ENCODE measurements at regions of chr6 and their contacts with region 1.

Region 1: GRCh38 chr6:44221291-44221960 is 2.0 kb upstream of the SLC29A1 start:
- DNase-seq: peak; percentile 61 to 87
- ATAC-seq: peak; percentile 62 to 78 (median 64)
- H3K4me3 ChIP-seq: no peak overlapping the region
- H3K4me3 Mint-ChIP-seq: peak overlapping the region; percentile 37
- H3K27ac ChIP-seq: no peak overlapping the region
- H3K27ac Mint-ChIP-seq: peak overlapping the region in 1 of 2 donors; percentile 65
- H3K4me1 ChIP-seq: peaks cover 33% of the 10 kb centered on the region
- H3K4me1 Mint-ChIP-seq: peaks cover 16 to 37% of the 10 kb centered on the region in 2 donors
- H3K27me3 ChIP-seq: no peaks in the 10 kb centered on the region
- H3K27me3 Mint-ChIP-seq: peaks cover 0 to 8% of the 10 kb centered on the region in 2 donors
- CTCF ChIP-seq: peak; percentile 80

Region 2: DNA sequence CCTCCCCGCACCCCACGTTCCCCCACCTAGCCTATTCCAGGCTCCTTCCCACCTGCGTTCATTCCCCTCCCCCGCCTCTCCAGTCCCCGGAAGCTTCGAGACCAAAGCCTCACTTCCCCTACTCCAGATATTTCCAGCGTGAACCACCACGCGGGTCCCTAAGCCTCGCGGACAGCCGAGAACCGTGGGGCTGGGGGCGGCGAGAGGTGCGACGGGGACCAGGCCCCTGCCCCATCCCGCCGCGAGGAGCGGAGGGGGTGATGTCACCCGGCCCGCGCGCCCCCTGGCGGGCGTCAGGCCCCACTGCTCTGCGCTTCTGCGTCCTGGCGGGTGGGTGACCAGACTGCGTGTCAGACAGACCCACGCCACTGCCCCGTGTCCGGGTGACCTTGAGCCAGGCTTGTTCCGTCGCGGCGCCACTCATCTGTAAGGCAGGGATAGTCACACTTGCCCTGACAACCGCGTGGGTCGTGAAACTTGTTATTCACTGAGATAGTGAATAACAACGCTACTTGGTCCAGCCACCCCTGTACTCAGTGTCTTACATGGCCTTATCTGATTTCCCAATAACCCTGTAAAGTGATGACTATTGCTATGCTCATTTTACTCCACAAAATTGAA is 16.5 kb after region 1 on chr6:
- intact Hi-C with region 1: loop called (anchors 1 kb)
- DNase-seq: peak; percentile 84 to 89
- ATAC-seq: peak; percentile 79 to 95 (median 90)
- H3K4me3 ChIP-seq: peak overlapping the region; percentile 85
- H3K4me3 Mint-ChIP-seq: peak overlapping the region; percentile 87
- H3K27ac ChIP-seq: peak overlapping the region; percentile 98
- H3K27ac Mint-ChIP-seq: peak overlapping the region; percentile 88 to 98
- H3K4me1 ChIP-seq: peaks cover 20% of the 10 kb centered on the region
- H3K4me1 Mint-ChIP-seq: peaks cover 8 to 16% of the 10 kb centered on the region in 2 donors
- H3K27me3 ChIP-seq: no peaks in the 10 kb centered on the region
- H3K27me3 Mint-ChIP-seq: no peaks in the 10 kb centered on the region
- CTCF ChIP-seq: peak; percentile 98

Region 3: GRCh38 chr6:44257025-44257752 is 35.8 kb after region 1 on chr6 and contains the start of gene SLC35B2:
- intact Hi-C with region 1: loop called (anchors 1 kb)
- DNase-seq: peak; percentile 76 to 86
- ATAC-seq: peak; percentile 80 to 92 (median 86)
- H3K4me3 ChIP-seq: peak within 1 kb of the TSS; percentile 71
- H3K4me3 Mint-ChIP-seq: peak within 1 kb of the TSS; percentile 92
- H3K27ac ChIP-seq: peak within 1 kb of the TSS; percentile 79
- H3K27ac Mint-ChIP-seq: peak within 1 kb of the TSS; percentile 90 to 97
- H3K4me1 ChIP-seq: peaks cover 32% of the 10 kb centered on the region
- H3K4me1 Mint-ChIP-seq: peaks cover 45 to 64% of the 10 kb centered on the region in 2 donors
- H3K27me3 ChIP-seq: no peaks in the 10 kb centered on the region
- H3K27me3 Mint-ChIP-seq: no peaks in the 10 kb centered on the region
- CTCF ChIP-seq: peak; percentile 66
- total RNA-seq, gene SLC35B2: 20.9 to 27.7 (median 26.8) TPM

Region 4: DNA sequence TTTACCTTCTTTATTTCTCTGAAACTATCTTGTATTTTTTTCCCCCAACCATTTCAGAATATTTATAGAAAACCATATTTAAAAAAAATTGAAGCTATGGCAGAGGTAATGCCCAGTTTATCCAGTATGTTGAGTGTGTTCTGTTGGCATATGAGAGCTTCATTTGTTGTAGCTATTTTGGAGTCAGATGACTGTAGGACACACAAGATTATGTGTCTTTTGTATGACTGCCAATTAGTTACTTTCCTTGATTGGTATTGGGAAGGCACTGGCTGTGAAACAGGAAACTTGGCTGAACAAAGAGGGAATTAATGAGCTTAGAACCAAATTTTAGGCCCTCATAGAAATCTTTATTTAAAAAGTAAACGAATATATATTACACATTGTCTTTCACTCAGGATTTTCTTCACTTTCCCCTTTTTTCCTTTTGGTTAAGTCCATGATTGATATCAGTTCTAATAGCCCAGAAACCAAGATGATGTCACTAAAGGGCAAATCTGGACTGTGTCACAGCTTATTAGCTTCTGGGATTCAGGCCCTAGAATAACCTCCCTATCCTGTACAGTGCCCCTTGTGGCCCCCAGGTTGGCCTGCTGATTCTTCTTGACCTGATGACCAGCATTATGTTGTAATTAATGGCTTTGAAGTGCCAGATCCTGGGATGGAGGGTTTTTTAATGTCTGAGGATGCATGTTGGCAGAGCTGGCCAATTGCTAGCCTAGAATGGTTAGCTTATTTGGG is 176.2 kb after region 1 on chr6:
- intact Hi-C with region 1: no loop called
- DNase-seq: no peak
- ATAC-seq: no peak
- H3K4me3 ChIP-seq: no peak overlapping the region
- H3K4me3 Mint-ChIP-seq: no peak overlapping the region
- H3K27ac ChIP-seq: no peak overlapping the region
- H3K27ac Mint-ChIP-seq: no peak overlapping the region
- H3K4me1 ChIP-seq: no peaks in the 10 kb centered on the region
- H3K4me1 Mint-ChIP-seq: peaks cover 14 to 37% of the 10 kb centered on the region in 2 donors
- H3K27me3 ChIP-seq: no peaks in the 10 kb centered on the region
- H3K27me3 Mint-ChIP-seq: no peaks in the 10 kb centered on the region
- CTCF ChIP-seq: no peak

Measured in natural killer cell (primary cell).